ENCODE measurements at regions of chr10 and their contacts with region 1.

Region 1: GRCh38 chr10:130190055-130190736 is 54.0 kb downstream of the GLRX3 start:
- DNase-seq: peak; percentile 81 to 93 (median 88)
- ATAC-seq: peak; percentile 97
- H3K4me3 ChIP-seq: peak overlapping the region; percentile 29
- H3K4me3 Mint-ChIP-seq: no peak overlapping the region
- H3K27ac ChIP-seq: no peak overlapping the region
- H3K27ac Mint-ChIP-seq: no peak overlapping the region
- H3K4me1 ChIP-seq: peaks cover 12% of the 10 kb centered on the region
- H3K4me1 Mint-ChIP-seq: no peaks in the 10 kb centered on the region
- H3K27me3 ChIP-seq: peaks cover 4% of the 10 kb centered on the region in 2 experiments
- H3K27me3 Mint-ChIP-seq: peaks cover 12% of the 10 kb centered on the region
- CTCF ChIP-seq: peak; percentile 100

Region 2: DNA sequence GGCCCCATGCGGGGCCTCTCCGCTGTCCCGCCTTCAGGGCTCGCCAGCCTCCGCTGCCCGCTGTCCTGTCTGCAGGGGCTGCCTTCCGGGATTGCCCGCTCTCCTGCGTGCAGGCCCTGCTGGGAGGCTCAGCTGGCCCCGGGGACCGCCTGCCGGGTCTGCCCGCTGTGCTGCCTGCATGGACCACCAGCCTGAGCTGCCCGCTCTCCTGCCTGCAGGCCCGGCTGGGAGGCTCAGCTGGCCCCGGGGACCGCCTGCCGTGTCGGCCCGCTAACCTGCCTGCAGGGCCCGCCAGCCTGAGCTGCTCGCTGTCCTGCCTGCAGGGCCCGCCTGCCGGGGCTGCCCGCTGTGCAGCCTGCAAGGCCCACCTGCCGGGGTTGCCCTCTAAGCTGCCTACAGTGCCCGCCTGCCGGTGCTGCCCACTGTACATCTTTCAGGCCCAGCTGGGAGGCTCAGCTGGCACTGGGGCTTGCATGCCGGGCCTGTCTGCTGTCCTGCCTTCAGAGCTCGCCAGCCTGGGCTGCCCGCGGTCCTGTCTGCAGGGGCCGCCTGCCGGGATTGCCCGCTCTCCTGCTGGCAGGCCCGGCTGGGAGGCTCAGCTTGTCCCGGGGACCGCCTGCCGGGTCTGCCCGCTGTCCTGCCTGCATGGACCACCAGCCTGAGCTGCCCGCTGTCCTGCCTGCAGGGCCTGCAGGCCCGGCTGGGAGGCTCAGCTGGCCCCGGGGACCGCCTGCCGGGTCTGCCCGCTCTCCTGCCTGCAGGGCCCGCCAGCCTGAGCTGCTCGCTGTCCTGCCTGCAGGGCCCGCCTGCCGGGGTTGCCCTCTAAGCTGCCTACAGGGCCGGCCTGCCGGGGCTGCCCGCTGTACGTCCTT is 111.1 kb after region 1 on chr10:
- CTCF ChIA-PET with region 1: no interaction called
- POLR2A ChIA-PET with region 1: no interaction called
- intact Hi-C with region 1: loop called in 1 of 2 experiments (anchors 5 kb)
- DNase-seq: peak; percentile 8 to 73 (median 50)
- ATAC-seq: peak; percentile 69
- H3K4me3 ChIP-seq: peak overlapping the region; percentile 31
- H3K4me3 Mint-ChIP-seq: peak overlapping the region; percentile 93
- H3K27ac ChIP-seq: peak overlapping the region in 1 of 2 donors; percentile 13
- H3K27ac Mint-ChIP-seq: peak overlapping the region; percentile 94
- H3K4me1 ChIP-seq: no peaks in the 10 kb centered on the region
- H3K4me1 Mint-ChIP-seq: peaks cover 18% of the 10 kb centered on the region
- H3K27me3 ChIP-seq: no peaks in the 10 kb centered on the region
- H3K27me3 Mint-ChIP-seq: no peaks in the 10 kb centered on the region
- CTCF ChIP-seq: no peak

Region 3: GRCh38 chr10:130333185-130333584 is 143.0 kb after region 1 on chr10:
- CTCF ChIA-PET with region 1: no interaction called
- POLR2A ChIA-PET with region 1: no interaction called
- intact Hi-C with region 1: loop called in 1 of 2 experiments (anchors 5 kb)
- DNase-seq: no peak
- ATAC-seq: no peak
- H3K4me3 ChIP-seq: no peak overlapping the region
- H3K4me3 Mint-ChIP-seq: no peak overlapping the region
- H3K27ac ChIP-seq: no peak overlapping the region
- H3K27ac Mint-ChIP-seq: no peak overlapping the region
- H3K4me1 ChIP-seq: no peaks in the 10 kb centered on the region
- H3K4me1 Mint-ChIP-seq: no peaks in the 10 kb centered on the region
- H3K27me3 ChIP-seq: peaks cover 0 to 1% of the 10 kb centered on the region in 2 experiments
- H3K27me3 Mint-ChIP-seq: peaks cover 20% of the 10 kb centered on the region
- CTCF ChIP-seq: no peak

Region 4: GRCh38 chr10:130782467-130782866 is 592.3 kb after region 1 on chr10:
- CTCF ChIA-PET with region 1: no interaction called
- POLR2A ChIA-PET with region 1: no interaction called
- intact Hi-C with region 1: loop called in 1 of 2 experiments (anchors 10 kb)
- DNase-seq: no peak
- ATAC-seq: no peak
- H3K4me3 ChIP-seq: no peak overlapping the region
- H3K4me3 Mint-ChIP-seq: no peak overlapping the region
- H3K27ac ChIP-seq: no peak overlapping the region
- H3K27ac Mint-ChIP-seq: no peak overlapping the region
- H3K4me1 ChIP-seq: no peaks in the 10 kb centered on the region
- H3K4me1 Mint-ChIP-seq: no peaks in the 10 kb centered on the region
- H3K27me3 ChIP-seq: no peaks in the 10 kb centered on the region
- H3K27me3 Mint-ChIP-seq: peaks cover 3% of the 10 kb centered on the region
- CTCF ChIP-seq: no peak

Region 5: GRCh38 chr10:131786756-131787605 is 1596.8 kb after region 1 on chr10:
- CTCF ChIA-PET with region 1: no interaction called
- POLR2A ChIA-PET with region 1: no interaction called
- intact Hi-C with region 1: loop called in 1 of 2 experiments (anchors 2 kb)
- DNase-seq: peak in 10 of 14 experiments; percentile 8 to 59 (median 18)
- ATAC-seq: no peak
- H3K4me3 ChIP-seq: no peak overlapping the region
- H3K4me3 Mint-ChIP-seq: no peak overlapping the region
- H3K27ac ChIP-seq: no peak overlapping the region
- H3K27ac Mint-ChIP-seq: no peak overlapping the region
- H3K4me1 ChIP-seq: no peaks in the 10 kb centered on the region
- H3K4me1 Mint-ChIP-seq: no peaks in the 10 kb centered on the region
- H3K27me3 ChIP-seq: peaks cover 0 to 2% of the 10 kb centered on the region in 2 experiments
- H3K27me3 Mint-ChIP-seq: peaks cover 21% of the 10 kb centered on the region
- CTCF ChIP-seq: peak; percentile 68

Region 6: GRCh38 chr10:131876508-131876907 is 1686.3 kb after region 1 on chr10:
- CTCF ChIA-PET with region 1: no interaction called
- POLR2A ChIA-PET with region 1: no interaction called
- intact Hi-C with region 1: loop called in 1 of 2 experiments (anchors 2 kb)
- DNase-seq: no peak
- ATAC-seq: no peak
- H3K4me3 ChIP-seq: no peak overlapping the region
- H3K4me3 Mint-ChIP-seq: no peak overlapping the region
- H3K27ac ChIP-seq: no peak overlapping the region
- H3K27ac Mint-ChIP-seq: no peak overlapping the region
- H3K4me1 ChIP-seq: peaks cover 5% of the 10 kb centered on the region
- H3K4me1 Mint-ChIP-seq: peaks cover 4% of the 10 kb centered on the region
- H3K27me3 ChIP-seq: peaks cover 10 to 14% of the 10 kb centered on the region in 2 experiments
- H3K27me3 Mint-ChIP-seq: peaks cover 51% of the 10 kb centered on the region
- CTCF ChIP-seq: no peak